Ovary (tissue), 10 donors: ENCODE measurements at regions of chr11 and their contacts with region 1.

Region 1: GRCh38 chr11:60899046-60899936 is 7.1 kb downstream of the PRPF19 start:
- DNase-seq: peak in 1 of 5 donors; percentile 44
- H3K4me3 ChIP-seq: no peak overlapping the region
- H3K27ac ChIP-seq: no peak overlapping the region
- H3K4me1 ChIP-seq: no peaks in the 10 kb centered on the region
- H3K27me3 ChIP-seq: no peaks in the 10 kb centered on the region
- CTCF ChIP-seq: peak; percentile 80 to 90 (median 83)
- EP300 ChIP-seq: no peak
- POLR2A ChIP-seq: no peak

Region 2: GRCh38 chr11:60705906-60706305 is 193.4 kb before region 1 on chr11:
- intact Hi-C with region 1: loop called in 1 of 4 experiments (anchors 5 kb)
- DNase-seq: no peak
- H3K4me3 ChIP-seq: no peak overlapping the region
- H3K27ac ChIP-seq: no peak overlapping the region
- H3K4me1 ChIP-seq: peaks cover 3% of the 10 kb centered on the region
- H3K27me3 ChIP-seq: no peaks in the 10 kb centered on the region
- CTCF ChIP-seq: no peak
- EP300 ChIP-seq: no peak
- POLR2A ChIP-seq: no peak

Region 3: GRCh38 chr11:60775420-60775961 is 123.8 kb before region 1 on chr11:
- intact Hi-C with region 1: loop called in 2 of 4 experiments (anchors 5 to 10 kb)
- DNase-seq: peak; percentile 87 to 91 (median 89)
- H3K4me3 ChIP-seq: no peak overlapping the region
- H3K27ac ChIP-seq: no peak overlapping the region
- H3K4me1 ChIP-seq: no peaks in the 10 kb centered on the region
- H3K27me3 ChIP-seq: no peaks in the 10 kb centered on the region
- CTCF ChIP-seq: peak; percentile 81 to 92 (median 89)
- EP300 ChIP-seq: no peak
- POLR2A ChIP-seq: no peak

Region 4: GRCh38 chr11:60786811-60787567 is 112.3 kb before region 1 on chr11:
- intact Hi-C with region 1: loop called in 1 of 4 experiments (anchors 10 kb)
- DNase-seq: peak; percentile 69 to 90 (median 82)
- H3K4me3 ChIP-seq: no peak overlapping the region
- H3K27ac ChIP-seq: no peak overlapping the region
- H3K4me1 ChIP-seq: peaks cover 6% of the 10 kb centered on the region
- H3K27me3 ChIP-seq: no peaks in the 10 kb centered on the region
- CTCF ChIP-seq: no peak
- EP300 ChIP-seq: no peak
- POLR2A ChIP-seq: no peak

Region 5: DNA sequence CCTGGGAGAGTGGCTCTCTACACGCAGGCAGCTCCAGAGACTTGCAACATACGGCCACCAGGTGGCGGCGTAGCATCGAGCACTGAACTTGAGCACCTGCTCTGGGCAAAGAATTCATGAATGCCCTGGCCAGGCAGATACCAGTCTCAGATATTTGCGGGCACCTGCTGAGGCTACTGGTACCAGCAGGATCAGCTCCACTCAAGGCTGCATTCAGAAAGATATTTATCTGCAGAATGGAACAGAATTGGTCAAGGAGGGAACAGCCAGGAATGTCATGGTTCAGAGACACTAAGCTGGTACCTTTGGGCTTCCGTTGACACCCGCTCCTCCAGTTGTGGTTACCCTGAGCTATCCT is 68.2 kb before region 1 on chr11:
- intact Hi-C with region 1: loop called in 3 of 4 experiments (anchors 5 kb)
- DNase-seq: peak; percentile 71 to 90 (median 85)
- H3K4me3 ChIP-seq: no peak overlapping the region
- H3K27ac ChIP-seq: no peak overlapping the region
- H3K4me1 ChIP-seq: peaks cover 2% of the 10 kb centered on the region
- H3K27me3 ChIP-seq: no peaks in the 10 kb centered on the region
- CTCF ChIP-seq: peak; percentile 83 to 90 (median 90)
- EP300 ChIP-seq: no peak
- POLR2A ChIP-seq: no peak

Region 6: DNA sequence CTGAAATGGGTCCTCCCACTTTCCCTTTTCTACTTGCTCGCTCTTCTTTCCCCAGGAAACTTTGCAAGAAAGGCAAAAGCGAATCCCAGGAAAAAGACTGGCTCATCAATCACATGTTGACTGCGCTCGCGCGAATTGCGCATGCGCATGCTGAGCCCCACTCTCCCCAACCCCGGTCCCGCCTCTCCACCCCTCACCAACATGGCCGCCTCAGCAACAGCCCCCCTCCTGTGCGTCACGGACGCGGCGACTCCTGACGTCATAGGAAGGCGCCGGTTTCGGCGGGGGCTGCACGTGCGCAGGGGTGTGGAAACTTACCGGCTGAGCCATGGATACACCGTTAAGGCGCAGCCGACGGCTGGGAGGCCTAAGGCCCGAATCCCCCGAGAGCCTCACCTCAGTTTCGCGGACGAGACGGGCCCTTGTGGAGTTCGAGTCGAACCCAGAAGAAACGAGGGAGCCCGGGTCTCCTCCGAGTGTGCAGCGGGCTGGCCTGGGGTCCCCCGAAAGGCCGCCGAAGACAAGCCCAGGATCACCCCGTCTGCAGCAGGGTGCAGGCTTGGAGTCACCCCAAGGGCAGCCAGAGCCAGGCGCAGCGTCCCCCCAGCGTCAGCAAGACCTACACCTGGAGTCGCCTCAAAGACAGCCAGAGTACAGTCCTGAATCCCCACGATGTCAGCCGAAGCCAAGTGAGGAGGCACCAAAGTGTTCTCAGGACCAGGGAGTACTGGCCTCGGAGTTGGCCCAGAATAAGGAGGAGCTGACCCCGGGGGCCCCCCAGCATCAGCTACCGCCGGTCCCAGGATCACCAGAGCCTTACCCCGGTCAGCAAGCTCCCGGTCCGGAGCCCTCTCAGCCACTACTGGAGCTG is 57.3 kb before region 1 on chr11 and contains the start of gene CCDC86:
- intact Hi-C with region 1: loop called in 1 of 4 experiments (anchors 10 kb)
- DNase-seq: peak; percentile 97 to 99 (median 98)
- H3K4me3 ChIP-seq: peak within 1 kb of the TSS; percentile 87
- H3K27ac ChIP-seq: peak within 1 kb of the TSS; percentile 22 to 56
- H3K4me1 ChIP-seq: peaks cover 16% of the 10 kb centered on the region
- H3K27me3 ChIP-seq: no peaks in the 10 kb centered on the region
- CTCF ChIP-seq: peak in 1 of 3 donors; percentile 31
- EP300 ChIP-seq: peak; percentile 37
- POLR2A ChIP-seq: peak; percentile 36
- total RNA-seq, gene CCDC86: 7.0 to 32.9 (median 20.4) TPM